PC-9 (cell line): ENCODE measurements at regions of chr6 and their contacts with region 1.

Region 1: GRCh38 chr6:19472847-19473246 is 364.3 kb upstream of the ID4 start:
- DNase-seq: peak in 1 of 2 experiments; percentile 30
- H3K4me3 ChIP-seq: no peak overlapping the region
- H3K27ac ChIP-seq: no peak overlapping the region
- H3K4me1 ChIP-seq: peaks cover 25% of the 10 kb centered on the region
- H3K27me3 ChIP-seq: no peaks in the 10 kb centered on the region
- CTCF ChIP-seq: no peak

Region 2: GRCh38 chr6:18997375-18997826 is 475.4 kb before region 1 on chr6:
- CTCF ChIA-PET with region 1: no interaction called
- POLR2A ChIA-PET with region 1: no interaction called
- intact Hi-C with region 1: loop called (anchors 1 kb)
- DNase-seq: peak; percentile 17 to 58
- H3K4me3 ChIP-seq: no peak overlapping the region
- H3K27ac ChIP-seq: no peak overlapping the region
- H3K4me1 ChIP-seq: no peaks in the 10 kb centered on the region
- H3K27me3 ChIP-seq: no peaks in the 10 kb centered on the region
- CTCF ChIP-seq: peak; percentile 77

Region 3: GRCh38 chr6:19268115-19268514 is 204.7 kb before region 1 on chr6:
- CTCF ChIA-PET with region 1: interaction called, 3 read pairs
- POLR2A ChIA-PET with region 1: no interaction called
- intact Hi-C with region 1: loop called (anchors 1 kb)
- DNase-seq: peak; percentile 40 to 95
- H3K4me3 ChIP-seq: no peak overlapping the region
- H3K27ac ChIP-seq: peak overlapping the region; percentile 51
- H3K4me1 ChIP-seq: peaks cover 30% of the 10 kb centered on the region
- H3K27me3 ChIP-seq: no peaks in the 10 kb centered on the region
- CTCF ChIP-seq: no peak

Region 4: DNA sequence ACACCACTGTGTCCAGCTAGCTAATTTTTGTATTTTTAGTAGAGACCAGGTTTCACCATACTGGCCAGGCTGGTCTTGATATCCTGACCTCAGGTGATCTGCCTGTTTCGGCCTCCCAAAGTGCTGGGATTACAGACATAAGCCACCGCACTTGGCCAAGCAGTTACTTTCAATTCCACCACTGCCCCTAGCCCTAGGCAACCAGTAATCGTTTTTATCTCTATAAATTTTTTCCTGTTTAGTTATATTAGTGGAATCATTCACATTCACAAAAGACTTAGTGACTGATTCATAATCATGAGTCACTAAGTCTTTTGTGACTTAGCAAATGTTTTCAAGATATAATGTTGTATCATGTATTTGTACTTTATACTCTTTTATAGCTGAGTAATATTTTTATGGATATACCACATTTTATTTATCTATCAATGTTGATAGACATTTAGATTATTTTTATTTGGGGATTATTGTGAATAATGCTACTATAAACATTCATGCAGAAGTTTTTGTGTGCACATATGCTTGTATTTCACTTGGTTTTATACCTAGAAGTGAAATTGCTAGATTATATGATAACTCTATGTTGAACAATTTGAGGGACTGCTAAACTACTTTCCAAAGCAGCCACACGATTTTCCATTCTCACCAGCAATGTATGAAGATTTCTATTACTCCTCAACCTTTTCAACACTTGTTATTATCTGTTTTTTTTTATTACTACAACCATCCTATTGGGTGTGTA is 57.1 kb before region 1 on chr6:
- CTCF ChIA-PET with region 1: no interaction called
- POLR2A ChIA-PET with region 1: no interaction called
- intact Hi-C with region 1: loop called (anchors 1 kb)
- DNase-seq: peak; percentile 60 to 94
- H3K4me3 ChIP-seq: peak overlapping the region; percentile 16; the same call in 1 of the 2 replicates
- H3K27ac ChIP-seq: peak overlapping the region; percentile 91
- H3K4me1 ChIP-seq: peaks cover 57% of the 10 kb centered on the region
- H3K27me3 ChIP-seq: no peaks in the 10 kb centered on the region
- CTCF ChIP-seq: no peak

Region 5: DNA sequence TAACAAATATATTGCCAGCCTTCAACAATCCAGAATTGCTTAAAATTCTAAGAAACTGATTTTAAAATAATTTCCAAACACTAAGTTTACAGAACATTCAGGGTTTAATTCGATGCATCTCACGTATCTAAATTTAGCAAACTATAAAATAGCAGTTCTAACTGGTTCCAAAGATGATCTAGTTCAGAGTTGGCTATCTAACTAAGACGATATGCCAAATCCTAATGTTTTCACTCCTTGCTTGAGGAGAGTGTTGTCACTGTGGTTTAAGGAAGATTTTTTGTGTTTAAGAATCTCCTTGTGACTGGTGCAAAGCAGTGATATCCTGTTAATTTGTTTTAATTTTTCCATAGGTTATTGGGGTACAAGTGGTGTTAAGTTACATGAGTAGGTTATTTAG is 52.8 kb after region 1 on chr6:
- CTCF ChIA-PET with region 1: no interaction called
- POLR2A ChIA-PET with region 1: no interaction called
- intact Hi-C with region 1: no loop called
- DNase-seq: no peak
- H3K4me3 ChIP-seq: no peak overlapping the region
- H3K27ac ChIP-seq: no peak overlapping the region
- H3K4me1 ChIP-seq: no peaks in the 10 kb centered on the region
- H3K27me3 ChIP-seq: no peaks in the 10 kb centered on the region
- CTCF ChIP-seq: no peak

Region 6: GRCh38 chr6:19538077-19538512 is 65.2 kb after region 1 on chr6:
- CTCF ChIA-PET with region 1: no interaction called
- POLR2A ChIA-PET with region 1: no interaction called
- intact Hi-C with region 1: loop called (anchors 1 kb)
- DNase-seq: peak; percentile 96 to 99
- H3K4me3 ChIP-seq: no peak overlapping the region
- H3K27ac ChIP-seq: no peak overlapping the region
- H3K4me1 ChIP-seq: peaks cover 24% of the 10 kb centered on the region
- H3K27me3 ChIP-seq: no peaks in the 10 kb centered on the region
- CTCF ChIP-seq: no peak

Region 7: DNA sequence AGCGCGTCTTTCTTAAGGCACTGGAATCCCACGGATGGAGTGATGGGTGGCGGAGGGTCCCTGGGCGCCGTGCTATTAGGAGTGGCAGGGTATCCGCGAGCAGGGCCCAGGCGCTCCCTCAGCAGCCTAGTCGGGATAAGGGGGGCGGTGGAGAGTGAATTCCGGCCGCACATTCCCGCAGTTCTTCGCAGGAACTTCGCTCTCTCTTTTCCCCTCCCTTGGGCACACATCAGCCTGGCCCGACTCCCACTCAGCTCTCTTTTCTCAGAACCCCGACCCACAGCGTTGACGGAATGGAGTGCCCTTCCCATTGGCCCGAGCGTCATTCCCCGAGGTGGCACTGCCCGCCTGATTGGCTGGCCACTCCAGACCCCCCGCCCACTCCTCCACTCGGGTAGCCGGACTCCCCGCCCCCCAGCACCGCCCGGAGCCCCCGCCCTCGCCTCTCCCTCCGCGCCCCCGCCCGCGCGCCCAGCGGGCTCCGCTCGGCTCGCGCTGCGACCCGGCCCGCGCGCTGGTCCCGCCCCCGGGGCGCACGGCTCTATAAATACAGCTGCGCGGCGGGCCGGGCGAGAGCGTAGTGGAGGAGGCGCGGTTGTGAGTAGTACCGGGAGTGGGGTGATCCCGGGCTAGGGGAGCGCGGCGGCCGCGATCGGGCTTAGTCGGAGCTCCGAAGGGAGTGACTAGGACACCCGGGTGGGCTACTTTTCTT is 364.1 kb after region 1 on chr6 and contains the start of gene ID4:
- CTCF ChIA-PET with region 1: no interaction called
- POLR2A ChIA-PET with region 1: interaction called, 3 read pairs
- intact Hi-C with region 1: loop called (anchors 2 kb)
- DNase-seq: peak in 1 of 2 experiments; percentile 83
- H3K4me3 ChIP-seq: peak within 1 kb of the TSS; percentile 66
- H3K27ac ChIP-seq: no peak within 1 kb of the TSS
- H3K4me1 ChIP-seq: peaks cover 13% of the 10 kb centered on the region
- H3K27me3 ChIP-seq: peaks cover 17% of the 10 kb centered on the region
- CTCF ChIP-seq: no peak
- total RNA-seq, gene ID4: 4.4 and 5.9 TPM in 2 replicates